Activated T-helper 2 cell treated with anti-CD3 and anti-CD28 coated beads, Interferon-gamma antibody, Interleukin-2, Interleukin-4, amounts not matched to agents 10 μg/mL and 5 μg/mL and 100 μg/mL, durations not matched to agents 14 hours and 24 hours and 36 hours (primary cell): ENCODE measurements at regions of chr1 and their contacts with region 1.

Region 1: GRCh38 chr1:32072622-32073298 is at the start of gene TMEM39B:
- DNase-seq: peak; percentile 94
- H3K4me3 Mint-ChIP-seq: peak within 1 kb of the TSS; percentile 87
- H3K27ac Mint-ChIP-seq: peak within 1 kb of the TSS; percentile 85
- H3K4me1 Mint-ChIP-seq: peaks cover 32% of the 10 kb centered on the region
- H3K27me3 Mint-ChIP-seq: no peaks in the 10 kb centered on the region
- total RNA-seq, gene TMEM39B: 32.5 and 34.5 TPM in 2 replicates

Region 2: GRCh38 chr1:31644560-31645273 is 428.0 kb before region 1 on chr1 and contains the start of gene PEF1:
- intact Hi-C with region 1: loop called (anchors 10 kb)
- DNase-seq: peak; percentile 98
- H3K4me3 Mint-ChIP-seq: peak within 1 kb of the TSS; percentile 96
- H3K27ac Mint-ChIP-seq: peak within 1 kb of the TSS; percentile 100
- H3K4me1 Mint-ChIP-seq: peaks cover 15% of the 10 kb centered on the region
- H3K27me3 Mint-ChIP-seq: no peaks in the 10 kb centered on the region
- total RNA-seq, gene PEF1: 56.5 and 61.5 TPM in 2 replicates

Region 3: DNA sequence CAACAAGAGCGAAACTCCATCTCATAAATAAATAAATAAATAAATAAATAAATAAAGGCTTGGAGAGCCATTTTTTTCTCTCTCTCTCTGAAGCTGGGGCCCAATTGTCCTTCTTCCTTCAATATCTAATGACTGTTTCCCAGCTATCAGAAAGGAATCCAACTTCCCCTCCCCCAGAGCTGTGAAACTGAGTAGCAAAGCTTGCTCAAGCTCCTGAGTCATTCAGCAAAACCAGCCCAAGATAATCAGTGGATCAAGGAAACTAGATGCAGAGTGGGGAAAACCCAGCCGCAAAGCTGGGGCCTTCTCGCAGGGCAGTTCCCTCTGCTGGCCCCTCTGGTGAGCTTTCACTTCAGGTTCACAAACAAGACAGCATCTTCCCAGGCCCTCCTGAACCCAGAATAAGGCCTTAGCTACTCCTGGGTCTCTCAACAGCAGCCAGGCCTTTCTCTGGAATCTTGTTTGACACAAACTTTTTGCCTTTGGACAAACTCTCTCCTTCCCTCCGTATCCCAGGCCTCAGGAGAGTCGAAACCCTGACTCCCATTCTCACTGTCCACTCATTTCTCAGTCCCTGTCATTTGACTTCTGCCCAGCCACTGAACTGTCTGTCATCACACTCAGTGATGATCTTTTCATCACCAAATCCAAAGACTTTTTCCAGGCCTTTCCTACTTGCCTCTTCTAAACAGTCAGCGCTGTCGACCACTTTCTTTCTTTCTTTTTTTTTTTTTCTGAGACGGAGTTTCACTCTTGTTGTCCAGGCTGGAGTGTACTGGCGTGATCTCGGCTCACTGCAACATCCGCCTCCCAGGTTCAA is 116.6 kb before region 1 on chr1:
- intact Hi-C with region 1: no loop called
- DNase-seq: peak; percentile 84
- H3K4me3 Mint-ChIP-seq: peak overlapping the region; percentile 32
- H3K27ac Mint-ChIP-seq: peak overlapping the region; percentile 90
- H3K4me1 Mint-ChIP-seq: peaks cover 67% of the 10 kb centered on the region
- H3K27me3 Mint-ChIP-seq: no peaks in the 10 kb centered on the region

Region 4: GRCh38 chr1:32013386-32014198 is 59.2 kb before region 1 on chr1 and contains the start of gene KHDRBS1:
- intact Hi-C with region 1: loop called (anchors 1 kb)
- DNase-seq: peak; percentile 99
- H3K4me3 Mint-ChIP-seq: peak within 1 kb of the TSS; percentile 96
- H3K27ac Mint-ChIP-seq: peak within 1 kb of the TSS; percentile 95
- H3K4me1 Mint-ChIP-seq: peaks cover 22% of the 10 kb centered on the region
- H3K27me3 Mint-ChIP-seq: no peaks in the 10 kb centered on the region
- total RNA-seq, gene KHDRBS1: 177 and 178 TPM in 2 replicates

Region 5: DNA sequence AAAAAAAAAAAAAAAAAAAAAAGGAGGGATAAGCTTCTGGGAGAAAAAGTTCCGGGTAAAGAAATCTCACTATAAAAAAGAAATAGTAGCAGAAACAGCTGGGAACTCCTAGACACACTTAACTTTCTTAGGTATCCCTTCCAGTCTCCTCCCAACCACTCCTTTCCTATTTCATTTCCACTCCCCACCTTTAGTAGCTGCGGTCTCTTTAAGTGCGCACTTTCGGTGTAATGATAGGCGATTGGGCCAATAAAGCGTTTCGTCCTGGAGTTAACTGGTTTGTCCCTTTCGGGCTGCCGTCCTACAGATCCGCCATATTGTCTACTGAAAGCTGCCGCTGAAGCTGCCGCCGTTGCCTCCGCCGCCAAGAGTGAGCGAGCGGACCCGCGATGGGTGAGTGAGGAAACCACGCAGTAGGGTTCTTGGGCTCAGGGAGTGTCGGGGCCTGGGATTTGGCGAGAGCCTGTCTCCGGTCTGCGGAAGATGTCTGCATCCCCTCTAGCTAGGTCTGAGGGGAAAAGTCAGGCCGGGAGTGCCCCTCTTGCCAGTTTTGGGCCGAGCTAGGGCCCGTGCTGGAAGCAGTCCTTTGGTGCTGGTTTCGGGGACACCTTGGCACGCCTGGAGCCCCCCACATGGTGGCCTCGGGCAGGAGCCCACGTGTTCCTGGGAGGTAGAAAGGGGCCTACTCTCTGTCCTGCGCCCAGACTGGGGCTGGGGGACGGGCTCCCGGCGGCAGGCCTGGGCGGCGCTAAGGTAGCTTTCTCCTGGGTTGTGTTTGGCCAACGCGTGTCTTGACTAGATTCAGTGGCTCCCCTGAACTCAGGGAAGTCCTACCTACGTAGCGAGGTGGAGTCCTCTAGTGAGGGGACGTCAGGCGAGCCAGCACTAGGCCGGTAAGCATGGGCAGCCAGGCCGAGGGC is 35.2 kb after region 1 on chr1 and contains the start of gene KPNA6:
- intact Hi-C with region 1: loop called (anchors 1 kb)
- DNase-seq: peak; percentile 90
- H3K4me3 Mint-ChIP-seq: peak within 1 kb of the TSS; percentile 98
- H3K27ac Mint-ChIP-seq: peak within 1 kb of the TSS; percentile 97
- H3K4me1 Mint-ChIP-seq: peaks cover 32% of the 10 kb centered on the region
- H3K27me3 Mint-ChIP-seq: no peaks in the 10 kb centered on the region
- total RNA-seq, gene KPNA6: 81.2 and 84.0 TPM in 2 replicates

Region 6: DNA sequence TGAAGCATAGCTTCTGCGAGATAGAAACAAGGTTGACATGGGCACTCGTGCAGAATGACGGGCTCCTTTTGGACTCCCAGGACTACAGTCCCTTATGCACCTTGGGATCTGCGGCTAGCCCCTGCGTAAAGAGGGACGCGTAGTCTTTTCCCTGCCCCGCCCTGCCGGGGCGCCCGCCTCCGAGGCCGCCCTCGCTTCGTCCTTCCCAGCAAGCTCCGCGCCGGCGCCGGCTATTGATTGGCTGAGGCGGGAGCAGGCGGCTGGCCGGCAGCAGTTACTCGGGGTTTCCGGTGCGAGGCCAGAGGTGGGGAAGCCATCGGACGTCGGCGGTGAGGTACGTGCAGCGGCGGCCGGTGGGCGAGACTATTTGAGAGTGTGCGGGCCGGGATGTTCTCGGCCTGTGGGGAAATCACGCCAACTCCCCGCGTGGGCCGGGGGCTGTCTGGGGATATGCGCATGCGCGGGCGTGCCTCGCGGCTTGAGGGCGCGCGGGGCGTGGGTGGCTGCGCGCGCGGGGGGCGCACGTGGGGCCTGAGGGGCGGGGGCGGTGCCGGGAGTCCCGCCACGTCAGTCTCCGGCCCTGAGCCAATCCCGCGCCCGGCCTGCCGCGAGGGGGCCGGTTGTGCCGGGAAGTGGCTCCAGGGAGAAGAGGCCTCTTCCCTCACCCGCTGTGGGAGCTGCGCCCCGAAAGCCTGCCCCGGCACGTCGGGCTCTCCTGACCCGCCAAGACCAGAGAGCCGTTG is 106.9 kb after region 1 on chr1 and contains the start of gene TXLNA:
- intact Hi-C with region 1: loop called (anchors 2 kb)
- DNase-seq: peak; percentile 87
- H3K4me3 Mint-ChIP-seq: peak within 1 kb of the TSS; percentile 97
- H3K27ac Mint-ChIP-seq: peak within 1 kb of the TSS; percentile 98
- H3K4me1 Mint-ChIP-seq: peaks cover 34% of the 10 kb centered on the region
- H3K27me3 Mint-ChIP-seq: no peaks in the 10 kb centered on the region
- total RNA-seq, gene TXLNA: 98.6 and 101 TPM in 2 replicates

Region 7: DNA sequence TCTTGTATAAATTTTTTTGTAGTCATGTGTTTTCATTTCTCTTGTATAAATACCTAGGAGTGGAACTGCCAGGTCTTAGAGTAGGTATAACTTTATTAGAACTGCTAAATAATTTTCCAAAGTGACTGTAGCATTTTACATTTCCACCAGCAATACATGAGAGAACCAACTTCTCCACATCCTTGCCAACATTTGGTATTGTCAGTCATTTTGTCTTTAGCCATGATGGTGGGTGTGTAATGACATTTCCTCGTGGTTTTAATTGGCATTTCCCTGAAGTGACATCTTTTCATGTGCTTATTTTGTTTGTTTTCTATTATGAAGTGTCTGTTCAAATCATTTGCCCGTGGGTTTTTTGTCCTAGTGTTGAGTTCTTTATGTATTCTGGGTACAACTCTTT is 496.2 kb after region 1 on chr1:
- intact Hi-C with region 1: no loop called
- DNase-seq: no peak
- H3K4me3 Mint-ChIP-seq: no peak overlapping the region
- H3K27ac Mint-ChIP-seq: no peak overlapping the region
- H3K4me1 Mint-ChIP-seq: peaks cover 2% of the 10 kb centered on the region
- H3K27me3 Mint-ChIP-seq: peaks cover 4% of the 10 kb centered on the region